Esophagus squamous epithelium (tissue), 5 donors: ENCODE measurements at regions of chr4 and their contacts with region 1.

Region 1: GRCh38 chr4:138035781-138036258 is 206.3 kb downstream of the SLC7A11 start:
- DNase-seq: no peak
- H3K4me3 ChIP-seq: no peak overlapping the region
- H3K27ac ChIP-seq: peak overlapping the region; percentile 37 to 71 (median 66)
- H3K4me1 ChIP-seq: peaks cover 0 to 49% (median 14%) of the 10 kb centered on the region in 3 donors
- H3K27me3 ChIP-seq: no peaks in the 10 kb centered on the region
- CTCF ChIP-seq: peak in 5 of 6 experiments; percentile 43 to 74 (median 52)
- POLR2A ChIP-seq: no peak

Region 2: GRCh38 chr4:137735561-137736104 is 300.2 kb before region 1 on chr4:
- intact Hi-C with region 1: no loop called
- DNase-seq: no peak
- H3K4me3 ChIP-seq: no peak overlapping the region
- H3K27ac ChIP-seq: no peak overlapping the region
- H3K4me1 ChIP-seq: no peaks in the 10 kb centered on the region
- H3K27me3 ChIP-seq: no peaks in the 10 kb centered on the region
- CTCF ChIP-seq: no peak
- POLR2A ChIP-seq: no peak

Region 3: GRCh38 chr4:137804906-137805495 is 230.8 kb before region 1 on chr4:
- intact Hi-C with region 1: no loop called
- DNase-seq: no peak
- H3K4me3 ChIP-seq: no peak overlapping the region
- H3K27ac ChIP-seq: no peak overlapping the region
- H3K4me1 ChIP-seq: no peaks in the 10 kb centered on the region
- H3K27me3 ChIP-seq: no peaks in the 10 kb centered on the region
- CTCF ChIP-seq: no peak
- POLR2A ChIP-seq: no peak

Region 4: DNA sequence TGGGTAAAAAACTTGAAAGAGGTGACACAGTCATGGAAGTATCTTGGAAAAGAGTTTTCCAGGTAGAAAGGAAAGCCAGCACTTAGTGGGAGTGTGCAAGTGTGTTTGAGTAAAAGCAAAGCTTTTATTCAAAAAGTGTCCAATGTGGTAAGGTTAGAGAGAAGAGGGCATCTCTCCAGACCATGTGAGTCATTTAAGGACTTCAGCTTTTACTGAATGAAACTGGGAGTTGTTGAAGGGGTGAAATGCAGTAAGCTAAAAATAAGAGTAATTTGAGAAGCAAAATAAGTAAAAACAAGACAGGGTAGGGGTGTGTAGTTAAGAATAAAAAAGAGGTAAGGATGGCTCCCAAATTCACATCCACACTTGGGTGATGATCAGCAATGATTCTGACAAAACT is 32.6 kb before region 1 on chr4:
- intact Hi-C with region 1: no loop called
- DNase-seq: no peak
- H3K4me3 ChIP-seq: no peak overlapping the region
- H3K27ac ChIP-seq: no peak overlapping the region
- H3K4me1 ChIP-seq: peaks cover 0 to 10% (median 0%) of the 10 kb centered on the region in 3 donors
- H3K27me3 ChIP-seq: no peaks in the 10 kb centered on the region
- CTCF ChIP-seq: no peak
- POLR2A ChIP-seq: no peak

Region 5: DNA sequence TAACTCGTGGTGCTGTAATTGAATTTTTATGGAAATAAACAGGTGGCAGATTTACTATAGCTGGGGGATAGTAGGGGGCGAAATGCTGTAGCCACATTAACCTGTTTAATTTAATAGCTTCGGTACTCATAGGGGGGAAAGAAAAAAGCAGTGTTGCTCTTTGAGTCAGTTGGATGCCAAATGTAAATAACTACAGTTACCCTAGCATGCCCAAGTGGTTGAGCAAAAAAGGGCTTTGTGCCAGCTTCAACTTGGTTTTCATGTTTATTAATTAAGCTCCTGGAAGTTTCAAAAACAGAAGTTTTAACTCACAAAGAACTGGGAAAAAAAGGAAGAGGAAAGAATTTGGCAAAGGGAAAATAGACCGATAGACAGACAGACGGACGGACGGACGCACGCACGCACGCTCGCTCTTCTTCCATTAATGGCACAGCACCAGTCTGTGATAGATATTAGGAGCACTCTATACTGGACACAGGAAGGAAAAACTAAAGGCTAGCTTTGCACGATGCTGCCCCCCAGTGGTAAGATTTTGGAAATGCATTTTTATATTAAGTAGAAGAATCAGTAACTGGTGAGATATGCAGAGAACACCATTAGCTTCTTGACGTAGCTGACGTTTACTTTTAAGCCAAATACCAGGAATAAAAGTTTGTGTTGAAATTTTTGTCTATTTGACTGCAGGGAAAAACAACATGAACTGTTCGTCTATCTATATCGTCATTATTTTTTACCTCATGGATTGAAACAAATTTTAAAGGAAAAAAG is 54.5 kb after region 1 on chr4:
- intact Hi-C with region 1: loop called (anchors 5 kb)
- DNase-seq: no peak
- H3K4me3 ChIP-seq: peak overlapping the region in 3 of 4 donors; percentile 32 to 47 (median 34)
- H3K27ac ChIP-seq: no peak overlapping the region
- H3K4me1 ChIP-seq: peaks cover 0 to 29% (median 11%) of the 10 kb centered on the region in 3 donors
- H3K27me3 ChIP-seq: no peaks in the 10 kb centered on the region
- CTCF ChIP-seq: peak; percentile 67 to 81 (median 78)
- POLR2A ChIP-seq: no peak